Sigmoid colon (tissue), 7 donors: ENCODE measurements at regions of chr2 and their contacts with region 1.

Region 1: GRCh38 chr2:224284134-224284946 is 117.6 kb downstream of the FAM124B start:
- DNase-seq: no peak
- H3K4me3 ChIP-seq: no peak overlapping the region
- H3K27ac ChIP-seq: no peak overlapping the region
- H3K4me1 ChIP-seq: no peaks in the 10 kb centered on the region
- H3K27me3 ChIP-seq: no peaks in the 10 kb centered on the region
- CTCF ChIP-seq: peak in 3 of 4 experiments; percentile 37 to 74 (median 57)
- EP300 ChIP-seq: no peak
- POLR2A ChIP-seq: no peak

Region 2: GRCh38 chr2:223970343-223971128 is 313.8 kb before region 1 on chr2:
- intact Hi-C with region 1: loop called (anchors 2 kb)
- DNase-seq: no peak
- H3K4me3 ChIP-seq: no peak overlapping the region
- H3K27ac ChIP-seq: no peak overlapping the region
- H3K4me1 ChIP-seq: no peaks in the 10 kb centered on the region
- H3K27me3 ChIP-seq: no peaks in the 10 kb centered on the region
- CTCF ChIP-seq: peak; percentile 44 to 92 (median 74)
- EP300 ChIP-seq: no peak
- POLR2A ChIP-seq: no peak

Region 3: DNA sequence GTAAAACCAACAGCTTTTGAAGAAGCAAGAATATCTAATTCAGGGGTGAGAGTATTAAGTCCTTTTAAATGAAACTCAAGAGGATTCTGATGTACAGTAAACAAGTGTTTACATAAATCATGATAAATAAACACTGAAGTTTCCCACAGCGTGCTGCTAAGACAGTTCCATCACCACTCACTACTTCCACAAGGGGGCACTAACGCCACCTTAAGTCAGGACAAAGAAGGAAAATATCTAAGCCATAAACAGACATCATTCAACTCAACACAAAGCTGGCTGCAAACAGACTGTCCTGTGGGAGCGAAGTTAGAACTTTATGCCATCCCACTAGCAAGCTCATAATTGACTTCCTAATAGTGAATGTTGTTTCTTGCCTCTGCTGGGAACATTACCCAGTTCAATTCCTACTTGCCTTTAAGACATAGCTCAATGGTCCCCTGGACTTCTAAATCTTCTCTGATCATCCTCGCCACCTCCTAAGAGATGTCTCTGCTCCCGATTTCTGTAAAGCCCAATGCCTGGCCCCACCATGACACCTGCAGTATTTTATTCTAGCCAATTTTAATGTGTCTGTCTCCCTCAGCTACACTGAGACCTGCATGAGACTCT is 290.6 kb before region 1 on chr2:
- intact Hi-C with region 1: loop called (anchors 2 kb)
- DNase-seq: peak; percentile 74
- H3K4me3 ChIP-seq: no peak overlapping the region
- H3K27ac ChIP-seq: no peak overlapping the region
- H3K4me1 ChIP-seq: peaks cover 0 to 6% (median 2%) of the 10 kb centered on the region in 4 donors
- H3K27me3 ChIP-seq: no peaks in the 10 kb centered on the region
- CTCF ChIP-seq: peak; percentile 38 to 83 (median 70)
- EP300 ChIP-seq: no peak
- POLR2A ChIP-seq: no peak